AG04450 (cell line): ENCODE measurements at regions of chr5 and their contacts with region 1.

Region 1: GRCh38 chr5:132386644-132387286 is 17.3 kb downstream of the SLC22A5 start:
- DNase-seq: no peak
- H3K4me3 ChIP-seq: no peak overlapping the region
- H3K27ac ChIP-seq: peak overlapping the region; percentile 43
- H3K27me3 ChIP-seq: no peaks in the 10 kb centered on the region
- CTCF ChIP-seq: peak; percentile 86

Region 2: GRCh38 chr5:132410451-132411381 is 24.0 kb after region 1 on chr5:
- CTCF ChIA-PET with region 1: interaction called, 10 read pairs
- POLR2A ChIA-PET with region 1: interaction called, 5 read pairs
- DNase-seq: no peak
- H3K4me3 ChIP-seq: peak overlapping the region; percentile 76
- H3K27ac ChIP-seq: peak overlapping the region; percentile 79
- H3K27me3 ChIP-seq: peaks cover 2% of the 10 kb centered on the region
- CTCF ChIP-seq: peak; percentile 61

Region 3: DNA sequence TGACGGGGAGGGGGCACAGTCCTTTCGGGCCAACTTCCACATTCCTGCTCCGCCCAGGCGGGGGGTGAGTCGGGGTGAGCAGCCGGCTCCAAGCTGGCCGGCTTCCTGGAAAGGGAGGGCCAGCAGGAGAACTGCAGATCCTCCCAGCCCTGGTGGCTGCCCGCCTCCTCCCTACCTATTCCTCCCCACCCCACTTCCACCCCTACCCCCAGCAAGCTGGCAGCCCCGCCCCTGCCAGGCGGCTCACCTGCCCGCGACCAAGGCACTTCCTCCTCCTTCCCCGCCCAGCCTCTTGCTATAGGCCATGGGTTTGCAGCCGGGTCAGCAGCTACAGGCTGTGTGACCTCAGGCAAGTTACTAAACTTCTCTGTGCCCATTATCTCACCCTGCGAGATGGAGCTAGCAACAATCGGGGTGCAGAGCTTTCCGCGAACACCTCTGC is 109.4 kb after region 1 on chr5:
- CTCF ChIA-PET with region 1: interaction called, 209 read pairs
- POLR2A ChIA-PET with region 1: interaction called, 45 read pairs
- DNase-seq: no peak
- H3K4me3 ChIP-seq: peak overlapping the region; percentile 74
- H3K27ac ChIP-seq: peak overlapping the region; percentile 97
- H3K27me3 ChIP-seq: no peaks in the 10 kb centered on the region
- CTCF ChIP-seq: no peak

Region 4: DNA sequence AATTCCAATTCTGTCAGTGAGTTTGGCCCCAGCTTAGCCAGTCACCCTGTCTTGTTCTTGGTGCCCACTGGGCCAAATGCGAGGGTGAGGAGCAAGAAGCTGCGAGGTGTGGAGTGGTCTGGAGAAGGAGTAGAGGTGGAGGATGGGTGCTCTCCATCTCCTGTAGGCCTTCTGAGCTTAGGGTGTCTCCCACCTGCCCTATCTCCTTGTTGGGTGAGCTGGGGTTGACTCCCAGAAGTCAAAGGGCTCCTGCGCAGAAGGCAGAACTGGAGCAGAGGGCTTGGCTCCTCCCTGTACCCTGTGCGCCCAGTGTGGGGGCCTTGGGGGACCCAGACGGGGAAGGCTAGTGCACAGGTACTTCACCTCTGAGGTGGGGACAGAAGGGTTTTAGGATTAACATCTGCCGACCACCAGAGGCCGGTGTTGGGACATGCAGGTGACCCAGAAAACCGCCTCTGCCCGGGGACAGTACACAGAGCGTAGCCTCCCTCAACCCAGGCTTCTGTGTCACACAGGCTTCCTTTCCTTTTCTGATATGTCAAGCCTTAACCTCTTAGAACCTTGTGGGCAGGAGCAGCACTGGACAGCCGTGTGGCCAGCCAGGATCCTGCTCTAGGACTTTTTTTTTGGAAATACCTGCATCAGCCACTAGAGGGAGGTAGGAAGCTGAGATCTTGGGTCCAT is 139.7 kb after region 1 on chr5:
- CTCF ChIA-PET with region 1: interaction called, 32 read pairs
- POLR2A ChIA-PET with region 1: no interaction called
- DNase-seq: no peak
- H3K4me3 ChIP-seq: peak overlapping the region; percentile 20; the same call in 1 of the 2 replicates
- H3K27ac ChIP-seq: no peak overlapping the region
- H3K27me3 ChIP-seq: peaks cover 10% of the 10 kb centered on the region
- CTCF ChIP-seq: peak; percentile 85

Region 5: GRCh38 chr5:132866342-132867045 is 479.7 kb after region 1 on chr5 and contains the starts of genes GDF9 and UQCRQ:
- CTCF ChIA-PET with region 1: interaction called, 18 read pairs
- POLR2A ChIA-PET with region 1: no interaction called
- DNase-seq: peak; percentile 99
- H3K4me3 ChIP-seq: peak within 1 kb of the TSS; percentile 97
- H3K27ac ChIP-seq: peak within 1 kb of the TSS; percentile 94
- H3K27me3 ChIP-seq: no peaks in the 10 kb centered on the region
- CTCF ChIP-seq: peak; percentile 42
- polyA plus RNA-seq, gene GDF9: 0.14 and 0.15 TPM in 2 replicates
- polyA plus RNA-seq, gene UQCRQ: 318 and 329 TPM in 2 replicates